Right ventricle myocardium superior (tissue), 1 donor: ENCODE measurements at regions of chr12 and their contacts with region 1.

Region 1: GRCh38 chr12:105382771-105383622 is 52.5 kb downstream of the C12orf75 start:
- DNase-seq: no peak
- ATAC-seq: peak; percentile 89

Region 2: DNA sequence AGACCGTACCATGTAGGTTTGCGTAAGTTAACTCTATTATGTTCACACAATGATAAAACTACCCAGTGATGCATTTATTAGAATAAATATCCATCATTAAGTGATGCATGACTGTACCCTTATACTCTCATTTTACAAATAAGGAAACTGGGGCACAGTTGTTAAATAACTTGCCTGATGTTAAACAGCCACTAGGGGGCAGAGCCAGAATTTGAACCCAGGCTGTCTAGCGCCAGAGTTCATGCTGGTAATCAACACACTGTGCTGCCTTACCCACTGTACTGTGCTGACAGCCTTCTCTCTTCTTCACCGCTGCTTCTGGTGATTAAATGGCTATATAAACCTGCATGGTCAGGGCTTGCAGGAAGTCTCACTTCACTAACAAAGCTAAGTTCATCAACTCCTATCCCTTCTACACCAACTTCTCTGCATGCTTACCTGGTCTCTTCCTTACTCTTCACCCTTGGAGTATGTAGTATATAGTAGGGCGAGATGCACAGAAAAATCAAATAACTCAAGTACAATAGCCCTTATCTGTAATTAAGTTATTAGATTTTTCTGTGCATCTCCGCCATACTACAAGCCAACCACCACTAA is 103.4 kb before region 1 on chr12:
- intact Hi-C with region 1: loop called (anchors 10 kb)
- DNase-seq: no peak
- ATAC-seq: peak; percentile 78

Region 3: DNA sequence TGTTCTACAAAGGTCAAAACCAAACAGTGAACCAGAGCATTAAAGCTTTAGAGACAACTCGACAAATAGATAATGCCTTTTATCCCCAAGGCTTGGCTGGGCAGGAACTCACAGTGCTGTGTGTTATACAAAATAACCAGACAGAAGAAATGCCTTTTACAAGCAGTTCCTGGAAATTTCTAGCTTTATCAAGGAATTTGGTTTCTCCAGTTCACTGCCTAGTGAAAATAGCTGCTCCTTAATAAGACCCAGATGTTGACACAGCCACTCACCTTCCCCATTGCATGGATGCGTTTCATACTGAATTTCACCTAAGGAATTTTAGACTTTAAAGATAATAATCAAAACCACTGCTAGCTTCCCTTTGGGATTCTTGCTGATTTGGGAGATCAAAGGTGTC is 109.6 kb after region 1 on chr12:
- intact Hi-C with region 1: no loop called
- DNase-seq: no peak
- ATAC-seq: no peak